ENCODE measurements at regions of chr19 and their contacts with region 1.

Region 1: GRCh38 chr19:36605101-36605876 is at the start of gene ZNF382:
- DNase-seq: peak; percentile 41
- ATAC-seq: peak; percentile 96
- H3K4me3 ChIP-seq: peak within 1 kb of the TSS; percentile 96
- H3K27ac ChIP-seq: peak within 1 kb of the TSS; percentile 64
- H3K4me1 ChIP-seq: no peaks in the 10 kb centered on the region
- H3K27me3 ChIP-seq: no peaks in the 10 kb centered on the region
- CTCF ChIP-seq: no peak
- POLR2A ChIP-seq: no peak
- RAD21 ChIP-seq: no peak
- total RNA-seq, gene ZNF382: 1.9 and 4.5 TPM in 2 replicates

Region 2: DNA sequence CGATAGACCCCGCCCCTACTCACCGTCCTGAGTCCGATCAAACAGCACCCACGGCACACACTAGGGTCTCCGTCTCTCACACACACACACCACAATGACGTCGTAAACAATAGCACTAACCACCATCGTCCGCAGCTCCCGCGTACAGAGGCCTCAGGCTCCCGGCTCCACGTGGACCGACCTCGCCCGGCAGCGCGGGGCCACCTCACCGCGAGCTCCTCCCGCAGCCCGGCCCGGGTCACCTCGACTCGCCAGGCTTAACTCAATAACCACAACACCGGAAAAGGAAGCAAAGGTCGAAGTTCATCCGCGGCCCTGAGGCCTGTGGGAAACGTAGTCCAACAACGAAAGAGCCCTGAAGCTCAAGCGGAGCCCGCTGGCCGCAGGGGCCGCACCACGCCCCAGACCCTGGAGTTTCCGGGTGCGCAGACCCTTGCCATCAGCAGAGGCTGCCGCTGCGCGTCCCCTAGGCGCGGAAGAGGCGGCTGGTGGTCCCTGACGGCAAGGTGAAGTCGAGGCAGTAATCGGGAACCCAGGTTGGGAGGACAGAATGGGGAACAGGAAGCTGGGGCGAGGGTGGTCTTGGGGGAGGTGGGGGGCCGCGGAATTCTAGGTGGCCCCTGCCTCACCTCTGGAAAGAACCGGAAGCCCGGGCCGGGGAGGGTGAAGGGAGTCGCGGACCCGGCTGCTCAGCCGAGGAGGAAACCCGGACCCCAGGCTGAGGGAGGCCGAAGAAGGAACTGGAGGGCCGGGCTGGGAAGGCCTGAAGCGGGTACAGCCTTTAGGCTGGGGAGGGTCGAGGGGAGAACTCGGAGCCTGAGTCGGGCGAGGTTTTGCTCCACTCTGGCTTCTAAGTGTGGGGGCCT is 32.0 kb before region 1 on chr19 and contains the start of gene ZNF529:
- CTCF ChIA-PET with region 1: no interaction called
- POLR2A ChIA-PET with region 1: no interaction called
- dilution Hi-C with region 1: no loop called
- in situ Hi-C with region 1: no loop called
- intact Hi-C with region 1: loop called (anchors 2 kb)
- DNase-seq: peak; percentile 86
- ATAC-seq: peak; percentile 96
- H3K4me3 ChIP-seq: peak within 1 kb of the TSS; percentile 58
- H3K27ac ChIP-seq: peak within 1 kb of the TSS; percentile 87
- H3K4me1 ChIP-seq: peaks cover 2% of the 10 kb centered on the region; the same call in 1 of the 2 replicates
- H3K27me3 ChIP-seq: no peaks in the 10 kb centered on the region
- CTCF ChIP-seq: no peak
- POLR2A ChIP-seq: peak; percentile 88
- RAD21 ChIP-seq: no peak
- total RNA-seq, gene ZNF529: 6.8 and 8.6 TPM in 2 replicates

Region 3: GRCh38 chr19:36719687-36720556 is 114.6 kb after region 1 on chr19:
- CTCF ChIA-PET with region 1: no interaction called
- POLR2A ChIA-PET with region 1: no interaction called
- dilution Hi-C with region 1: no loop called
- in situ Hi-C with region 1: no loop called
- intact Hi-C with region 1: no loop called
- DNase-seq: no peak
- ATAC-seq: no peak
- H3K4me3 ChIP-seq: no peak overlapping the region
- H3K27ac ChIP-seq: no peak overlapping the region
- H3K4me1 ChIP-seq: no peaks in the 10 kb centered on the region
- H3K27me3 ChIP-seq: no peaks in the 10 kb centered on the region
- CTCF ChIP-seq: no peak
- POLR2A ChIP-seq: no peak
- RAD21 ChIP-seq: no peak

Measured in IMR-90 (cell line).